ENCODE measurements at regions of chr11 and their contacts with region 1.

Region 1: GRCh38 chr11:61567286-61568061 is 13.4 kb downstream of the SYT7 start:
- DNase-seq: peak; percentile 81
- ATAC-seq: peak; percentile 96
- H3K4me3 ChIP-seq: peak overlapping the region in 1 of 2 experiments; percentile 28; a peak in 1 of 4 replicates
- H3K27ac ChIP-seq: no peak overlapping the region
- H3K4me1 ChIP-seq: peaks cover 5 to 14% of the 10 kb centered on the region in 2 experiments; a peak in 3 of 4 replicates
- H3K27me3 ChIP-seq: no peaks in the 10 kb centered on the region
- CTCF ChIP-seq: peak; percentile 92 to 96 (median 94)
- POLR2A ChIP-seq: no peak
- RAD21 ChIP-seq: no peak; the same call in 1 of the 2 replicates

Region 2: GRCh38 chr11:61509043-61510029 is 58.1 kb before region 1 on chr11:
- CTCF ChIA-PET with region 1: no interaction called
- POLR2A ChIA-PET with region 1: no interaction called
- RAD21 ChIA-PET with region 1: no interaction called
- intact Hi-C with region 1: loop called (anchors 2 kb)
- DNase-seq: peak; percentile 37
- ATAC-seq: peak; percentile 76
- H3K4me3 ChIP-seq: no peak overlapping the region
- H3K27ac ChIP-seq: no peak overlapping the region
- H3K4me1 ChIP-seq: peaks cover 17 to 30% of the 10 kb centered on the region in 2 experiments; a peak in 3 of 4 replicates
- H3K27me3 ChIP-seq: peaks cover 7% of the 10 kb centered on the region; the same call in 1 of the 2 replicates
- CTCF ChIP-seq: peak in 2 of 3 experiments; percentile 17 to 22; a peak in 3 of 6 replicates
- POLR2A ChIP-seq: no peak
- RAD21 ChIP-seq: no peak

Region 3: DNA sequence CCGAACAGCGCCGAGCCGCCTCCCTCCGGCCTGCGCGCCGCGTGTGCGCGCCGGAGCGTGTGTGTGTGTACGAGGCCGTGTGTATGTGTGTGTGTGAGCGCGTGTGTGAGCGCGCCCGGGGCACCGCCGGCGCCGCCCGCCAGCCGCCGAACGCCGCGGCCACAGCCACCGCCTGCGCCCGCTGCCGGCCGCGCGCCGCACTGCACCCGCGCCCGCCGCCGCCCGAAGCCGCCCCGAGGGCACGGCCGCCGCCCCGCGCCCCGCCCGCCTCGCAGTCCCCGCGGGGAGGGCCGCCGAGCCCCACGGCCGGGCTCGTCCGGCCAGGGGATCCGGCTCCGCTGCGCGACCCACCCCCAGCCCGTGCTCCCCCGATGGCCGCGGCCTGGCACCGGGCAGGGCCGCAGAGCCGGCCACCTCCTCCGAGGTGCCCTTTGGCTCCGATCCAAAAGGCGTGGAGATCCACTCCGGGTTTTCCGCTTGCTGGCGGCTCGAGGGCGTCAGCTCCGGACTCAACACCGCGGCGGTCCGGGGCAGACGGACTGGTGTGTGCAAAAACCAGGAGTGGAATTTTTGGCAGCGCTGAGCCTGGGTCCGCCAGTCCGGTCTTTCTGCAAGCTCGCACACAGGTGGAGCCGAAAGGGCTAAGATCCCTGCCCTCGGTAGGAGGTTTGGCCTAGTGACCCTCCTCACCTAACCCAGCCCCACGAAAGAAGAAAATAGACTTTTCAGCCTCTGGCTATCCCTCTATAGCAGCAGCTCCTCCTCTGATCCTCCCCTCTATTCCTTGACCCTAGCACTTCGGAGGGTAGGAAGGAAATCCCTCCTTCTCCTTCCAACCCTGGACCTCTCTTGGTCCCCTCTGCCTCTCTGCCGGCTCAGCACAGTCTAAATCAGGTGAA is 13.8 kb after region 1 on chr11 and contains the start of gene SYT7:
- CTCF ChIA-PET with region 1: interaction called, 15 read pairs
- POLR2A ChIA-PET with region 1: no interaction called
- RAD21 ChIA-PET with region 1: no interaction called
- intact Hi-C with region 1: no loop called
- DNase-seq: peak; percentile 94
- ATAC-seq: peak; percentile 84
- H3K4me3 ChIP-seq: peak within 1 kb of the TSS; percentile 62 to 82
- H3K27ac ChIP-seq: peak within 1 kb of the TSS; percentile 83
- H3K4me1 ChIP-seq: peaks cover 29 to 44% of the 10 kb centered on the region in 2 experiments; a peak in 3 of 4 replicates
- H3K27me3 ChIP-seq: no peaks in the 10 kb centered on the region
- CTCF ChIP-seq: no peak
- POLR2A ChIP-seq: no peak
- RAD21 ChIP-seq: no peak
- total RNA-seq, gene SYT7: 27.4 TPM